Dendritic cell treated with granulocyte-macrophage colony-stimulating factor and Interleukin-4, amounts not matched to agents 40 ng/mL and 50 ng/mL, for 4 days (primary cell): ENCODE measurements at regions of chr1 and their contacts with region 1.

Region 1: GRCh38 chr1:159015440-159015909 is 5.8 kb downstream of the IFI16 start:
- H3K4me3 Mint-ChIP-seq: peak overlapping the region; percentile 40
- H3K27ac Mint-ChIP-seq: peak overlapping the region; percentile 92
- H3K4me1 Mint-ChIP-seq: peaks cover 65% of the 10 kb centered on the region
- H3K27me3 Mint-ChIP-seq: no peaks in the 10 kb centered on the region

Region 2: DNA sequence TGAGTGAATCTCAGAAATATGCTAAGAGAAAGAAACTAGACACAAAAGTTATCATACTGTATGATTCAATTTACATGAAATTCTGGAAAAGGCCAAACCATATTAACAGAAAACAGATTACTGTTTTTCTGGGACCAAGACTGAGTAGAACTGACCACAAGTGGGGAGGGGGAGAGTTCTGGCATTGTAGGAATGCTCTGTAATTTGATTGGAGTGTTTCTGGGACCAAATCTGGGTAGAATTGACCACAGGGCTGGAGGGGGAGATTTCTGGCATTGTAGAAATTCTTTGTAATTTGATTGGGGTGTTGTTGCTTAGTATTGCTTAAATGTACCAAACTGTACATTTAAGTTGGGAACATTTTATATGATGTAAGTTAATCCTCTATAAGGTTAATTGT is 557.2 kb before region 1 on chr1:
- intact Hi-C with region 1: no loop called
- H3K4me3 Mint-ChIP-seq: no peak overlapping the region
- H3K27ac Mint-ChIP-seq: no peak overlapping the region
- H3K4me1 Mint-ChIP-seq: no peaks in the 10 kb centered on the region
- H3K27me3 Mint-ChIP-seq: peaks cover 15% of the 10 kb centered on the region

Region 3: DNA sequence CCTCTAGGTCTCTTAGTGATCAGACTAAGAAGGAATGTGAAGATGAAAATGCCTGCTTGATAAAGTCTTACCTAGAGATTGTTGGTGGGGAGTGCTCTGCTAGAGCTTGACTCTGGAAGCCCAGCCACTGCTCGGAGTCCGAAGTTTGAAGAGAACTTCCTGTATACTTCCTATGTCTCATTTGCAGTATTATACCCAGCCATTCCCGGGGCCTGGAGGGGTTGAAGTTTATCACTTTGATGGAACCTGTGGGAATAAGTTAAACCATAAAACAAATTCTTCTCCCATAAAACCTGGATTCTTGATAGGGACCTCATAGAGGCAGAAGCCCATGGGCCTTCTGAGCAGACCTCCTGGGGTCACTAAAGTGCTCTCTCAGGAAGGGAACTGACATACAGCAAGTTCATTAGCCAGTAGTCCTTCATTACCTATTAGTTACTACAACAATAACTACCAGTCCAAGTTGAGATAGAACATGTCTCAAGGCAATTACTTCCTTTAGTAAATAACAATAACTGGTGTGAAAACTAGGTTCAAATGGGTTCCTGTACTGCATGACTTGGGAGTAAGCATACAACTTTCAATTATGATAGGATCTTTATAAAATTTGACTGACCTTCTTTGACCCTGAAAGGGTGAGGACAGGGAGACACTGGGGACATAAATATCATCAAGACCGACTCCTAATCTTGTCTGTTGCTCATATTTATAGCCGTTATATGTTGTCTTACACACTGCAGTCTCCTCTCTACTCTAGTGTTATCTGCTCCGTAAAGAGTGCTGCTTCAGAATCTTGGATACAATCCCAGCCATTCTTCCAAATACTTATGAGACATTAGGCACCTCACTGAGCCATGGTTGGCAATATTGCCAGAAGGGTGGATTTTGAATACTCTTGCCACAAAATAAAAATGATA is 243.3 kb before region 1 on chr1 and contains the start of gene OR6N1:
- intact Hi-C with region 1: no loop called
- H3K4me3 Mint-ChIP-seq: no peak within 1 kb of the TSS
- H3K27ac Mint-ChIP-seq: no peak within 1 kb of the TSS
- H3K4me1 Mint-ChIP-seq: no peaks in the 10 kb centered on the region
- H3K27me3 Mint-ChIP-seq: no peaks in the 10 kb centered on the region

Region 4: GRCh38 chr1:158969855-158970254 is 45.6 kb before region 1 on chr1:
- intact Hi-C with region 1: no loop called
- H3K4me3 Mint-ChIP-seq: no peak overlapping the region
- H3K27ac Mint-ChIP-seq: no peak overlapping the region
- H3K4me1 Mint-ChIP-seq: no peaks in the 10 kb centered on the region
- H3K27me3 Mint-ChIP-seq: peaks cover 3% of the 10 kb centered on the region

Region 5: DNA sequence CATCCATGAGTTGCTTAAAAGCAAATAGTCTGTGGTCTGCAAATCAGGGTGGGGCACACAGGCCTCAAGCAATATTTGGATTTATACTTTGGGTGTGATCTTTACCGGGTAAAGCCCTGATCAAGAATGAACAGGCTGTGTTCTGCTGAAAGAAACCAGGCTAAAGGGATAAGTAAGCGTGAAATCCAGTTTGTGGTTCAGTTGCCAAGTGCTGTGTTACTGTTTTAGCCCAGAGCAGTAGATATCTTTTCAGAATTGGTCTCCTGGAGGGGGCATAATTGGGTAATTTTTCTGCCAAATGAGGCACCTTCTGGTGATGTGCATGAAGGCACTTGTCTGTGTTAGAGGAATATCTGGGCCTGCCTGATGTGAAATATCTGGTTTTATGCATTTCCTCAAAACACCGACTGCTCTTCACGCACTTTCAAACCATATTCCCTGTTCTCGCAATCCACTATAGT is 39.7 kb after region 1 on chr1:
- intact Hi-C with region 1: loop called (anchors 2 kb)
- H3K4me3 Mint-ChIP-seq: no peak overlapping the region
- H3K27ac Mint-ChIP-seq: peak overlapping the region; percentile 18
- H3K4me1 Mint-ChIP-seq: peaks cover 41% of the 10 kb centered on the region
- H3K27me3 Mint-ChIP-seq: no peaks in the 10 kb centered on the region

Region 6: GRCh38 chr1:159177273-159177907 is 161.9 kb after region 1 on chr1:
- intact Hi-C with region 1: no loop called
- H3K4me3 Mint-ChIP-seq: no peak overlapping the region
- H3K27ac Mint-ChIP-seq: no peak overlapping the region
- H3K4me1 Mint-ChIP-seq: peaks cover 26% of the 10 kb centered on the region
- H3K27me3 Mint-ChIP-seq: peaks cover 56% of the 10 kb centered on the region